Caco-2 (cell line): ENCODE measurements at regions of chr6 and their contacts with region 1.

Region 1: GRCh38 chr6:7615611-7616383 is 25.8 kb downstream of the SNRNP48 start:
- DNase-seq: peak in 1 of 2 experiments; percentile 69
- H3K4me3 ChIP-seq: no peak overlapping the region
- H3K4me3 Mint-ChIP-seq: peak overlapping the region; percentile 40
- H3K27ac Mint-ChIP-seq: peak overlapping the region; percentile 10
- H3K4me1 ChIP-seq: peaks cover 6% of the 10 kb centered on the region; the same call in 1 of the 2 replicates
- H3K4me1 Mint-ChIP-seq: peaks cover 13% of the 10 kb centered on the region
- H3K27me3 ChIP-seq: no peaks in the 10 kb centered on the region
- H3K27me3 Mint-ChIP-seq: no peaks in the 10 kb centered on the region
- CTCF ChIP-seq: peak; percentile 73 to 76

Region 2: DNA sequence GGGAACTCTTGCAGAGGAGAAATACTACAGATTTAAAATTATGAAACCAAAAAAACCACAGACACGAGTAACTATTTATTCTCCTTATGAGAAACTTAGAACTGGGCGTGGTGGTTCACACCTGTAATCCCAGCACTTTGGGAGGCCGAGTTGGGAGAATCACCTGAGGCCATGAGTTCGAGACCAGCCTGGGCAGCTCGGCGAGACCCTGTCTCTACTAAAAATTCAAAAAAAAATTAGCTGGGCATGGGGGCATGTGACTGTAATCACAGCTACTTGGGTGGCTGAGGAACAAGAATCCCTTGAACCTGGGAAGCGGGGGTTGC is 339.6 kb before region 1 on chr6:
- CTCF ChIA-PET with region 1: interaction called, 10 read pairs
- POLR2A ChIA-PET with region 1: no interaction called
- intact Hi-C with region 1: loop called (anchors 1 kb)
- DNase-seq: no peak
- H3K4me3 ChIP-seq: no peak overlapping the region
- H3K4me3 Mint-ChIP-seq: no peak overlapping the region
- H3K27ac Mint-ChIP-seq: no peak overlapping the region
- H3K4me1 ChIP-seq: no peaks in the 10 kb centered on the region; the same call in 1 of the 2 replicates
- H3K4me1 Mint-ChIP-seq: no peaks in the 10 kb centered on the region
- H3K27me3 ChIP-seq: no peaks in the 10 kb centered on the region
- H3K27me3 Mint-ChIP-seq: no peaks in the 10 kb centered on the region
- CTCF ChIP-seq: no peak

Region 3: DNA sequence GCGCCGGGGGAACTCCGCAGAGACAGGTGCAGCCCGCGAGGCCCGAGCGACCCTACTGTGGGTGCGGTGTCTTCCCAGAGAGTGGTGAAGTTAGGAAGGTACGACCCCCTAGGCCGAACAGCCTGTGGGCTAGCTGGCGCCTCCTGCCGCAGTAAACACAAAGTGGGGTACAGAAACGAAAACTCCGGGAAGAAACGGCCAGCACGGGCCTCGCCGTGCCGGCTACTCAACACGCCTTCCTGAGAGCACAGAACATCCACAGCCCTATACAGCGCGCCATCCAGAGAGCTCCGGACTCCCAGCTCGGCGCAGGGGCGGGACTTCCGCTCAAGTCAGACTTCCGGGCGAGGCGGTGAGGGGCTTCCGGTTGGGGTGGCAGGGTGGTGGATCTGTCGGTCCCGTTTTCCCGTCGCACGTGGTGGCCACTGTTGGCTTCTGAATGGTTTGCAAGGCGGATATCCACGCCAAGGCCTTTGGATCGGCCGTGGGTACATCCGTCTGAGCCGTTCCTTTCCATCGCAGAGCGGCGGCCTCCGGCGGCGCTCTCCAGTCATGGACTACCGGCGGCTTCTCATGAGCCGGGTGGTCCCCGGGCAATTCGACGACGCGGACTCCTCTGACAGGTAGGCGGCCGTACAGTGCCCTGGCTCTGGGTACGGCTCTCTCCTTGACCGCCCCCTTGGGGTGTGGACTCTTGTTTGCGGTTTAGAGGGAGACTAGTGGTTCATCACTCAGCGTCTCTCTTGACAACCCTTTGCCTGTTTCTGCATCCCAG is 226.2 kb before region 1 on chr6 and contains the starts of genes CAGE1 and RIOK1:
- CTCF ChIA-PET with region 1: interaction called, 3 read pairs
- POLR2A ChIA-PET with region 1: no interaction called
- intact Hi-C with region 1: loop called (anchors 1 kb)
- DNase-seq: peak; percentile 95
- H3K4me3 ChIP-seq: peak within 1 kb of the TSS; percentile 59
- H3K4me3 Mint-ChIP-seq: peak within 1 kb of the TSS; percentile 77
- H3K27ac Mint-ChIP-seq: peak within 1 kb of the TSS; percentile 99
- H3K4me1 ChIP-seq: peaks cover 17% of the 10 kb centered on the region
- H3K4me1 Mint-ChIP-seq: peaks cover 34% of the 10 kb centered on the region
- H3K27me3 ChIP-seq: no peaks in the 10 kb centered on the region
- H3K27me3 Mint-ChIP-seq: no peaks in the 10 kb centered on the region
- CTCF ChIP-seq: peak in 1 of 2 experiments; percentile 27
- total RNA-seq, gene CAGE1: 0.26 and 0.59 TPM in 2 replicates
- total RNA-seq, gene RIOK1: 34.2 and 36.1 TPM in 2 replicates

Region 4: GRCh38 chr6:7424967-7425807 is 190.6 kb before region 1 on chr6:
- CTCF ChIA-PET with region 1: interaction called, 7 read pairs
- POLR2A ChIA-PET with region 1: no interaction called
- intact Hi-C with region 1: loop called (anchors 1 kb)
- DNase-seq: peak; percentile 49 to 57
- H3K4me3 ChIP-seq: no peak overlapping the region
- H3K4me3 Mint-ChIP-seq: no peak overlapping the region
- H3K27ac Mint-ChIP-seq: no peak overlapping the region
- H3K4me1 ChIP-seq: peaks cover 8% of the 10 kb centered on the region
- H3K4me1 Mint-ChIP-seq: peaks cover 5% of the 10 kb centered on the region
- H3K27me3 ChIP-seq: no peaks in the 10 kb centered on the region
- H3K27me3 Mint-ChIP-seq: no peaks in the 10 kb centered on the region
- CTCF ChIP-seq: peak; percentile 37 to 54

Region 5: DNA sequence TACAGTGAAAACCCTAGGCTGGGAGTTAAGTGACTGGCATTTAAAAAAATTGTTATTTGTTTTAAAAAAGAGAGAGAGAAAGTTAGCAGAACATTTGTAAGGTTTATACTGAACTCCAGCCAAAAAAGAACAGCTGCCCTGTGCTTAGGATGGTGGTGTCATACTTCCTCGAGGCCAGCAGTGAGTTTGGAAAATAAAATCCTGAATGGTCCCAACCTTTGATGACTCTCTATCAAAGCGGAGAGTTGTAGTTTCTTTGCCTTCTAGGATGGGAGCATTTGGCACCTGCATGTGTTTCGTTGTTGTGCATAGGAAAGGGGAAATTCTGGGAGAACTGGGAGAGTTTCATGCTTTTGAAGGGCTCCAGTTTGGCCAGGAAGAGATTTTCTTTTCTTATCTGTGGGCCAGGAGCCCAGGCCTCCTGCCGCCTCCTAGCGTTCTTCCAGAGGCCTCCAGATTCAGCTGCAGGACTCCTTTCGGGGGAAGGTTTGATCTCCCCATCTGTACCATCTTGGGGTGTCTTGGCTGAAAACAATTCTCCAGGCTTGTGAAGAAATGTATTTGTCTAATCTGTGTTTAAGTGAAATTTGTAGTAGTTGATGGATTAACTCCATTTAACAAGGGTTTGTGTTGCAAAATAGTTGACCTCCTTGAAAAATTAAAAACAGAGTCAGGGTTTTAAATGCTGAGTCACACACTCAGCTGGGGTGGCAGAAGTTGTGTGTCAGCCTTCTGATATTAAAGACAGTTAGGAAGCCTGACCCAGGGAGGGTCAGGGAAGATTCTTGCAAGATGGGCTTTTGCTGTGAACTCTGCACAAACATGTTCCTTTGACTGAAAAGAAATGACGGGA is 231.4 kb after region 1 on chr6:
- CTCF ChIA-PET with region 1: no interaction called
- POLR2A ChIA-PET with region 1: no interaction called
- intact Hi-C with region 1: no loop called
- DNase-seq: no peak
- H3K4me3 ChIP-seq: no peak overlapping the region
- H3K4me3 Mint-ChIP-seq: no peak overlapping the region
- H3K27ac Mint-ChIP-seq: no peak overlapping the region
- H3K4me1 ChIP-seq: no peaks in the 10 kb centered on the region
- H3K4me1 Mint-ChIP-seq: no peaks in the 10 kb centered on the region
- H3K27me3 ChIP-seq: no peaks in the 10 kb centered on the region; the same call in 1 of the 2 replicates
- H3K27me3 Mint-ChIP-seq: peaks cover 3% of the 10 kb centered on the region
- CTCF ChIP-seq: no peak